GM10248 (cell line): ENCODE measurements at regions of chr1 and their contacts with region 1.

Region 1: GRCh38 chr1:30743584-30744059 is 14.0 kb downstream of the LAPTM5 start:
- DNase-seq: peak; percentile 81
- CTCF ChIP-seq: no peak

Region 2: DNA sequence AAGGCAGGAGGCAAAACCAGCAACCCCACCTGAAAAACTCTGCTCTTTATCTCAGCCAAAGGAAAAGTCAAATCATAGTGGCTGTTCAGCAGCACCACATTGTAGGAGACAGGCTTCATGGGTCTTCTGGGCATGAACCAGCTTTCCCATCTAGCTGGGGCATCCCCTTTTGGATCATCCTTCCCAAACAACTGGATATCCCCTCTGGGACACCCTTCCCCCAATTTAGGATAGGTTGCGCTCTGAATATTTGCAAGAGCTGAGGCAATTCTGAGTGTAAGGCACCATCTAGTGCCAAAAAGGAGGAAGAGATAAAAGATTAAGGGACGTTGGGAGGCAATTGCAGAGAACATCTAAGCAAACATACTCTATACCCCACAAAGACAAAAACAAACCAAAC is 316.1 kb before region 1 on chr1:
- CTCF ChIA-PET with region 1: no interaction called
- POLR2A ChIA-PET with region 1: no interaction called
- DNase-seq: no peak
- CTCF ChIP-seq: no peak

Region 3: GRCh38 chr1:30597711-30598110 is 145.9 kb before region 1 on chr1:
- CTCF ChIA-PET with region 1: no interaction called
- POLR2A ChIA-PET with region 1: no interaction called
- DNase-seq: no peak
- CTCF ChIP-seq: no peak

Region 4: GRCh38 chr1:30664103-30664755 is 79.4 kb before region 1 on chr1:
- CTCF ChIA-PET with region 1: no interaction called
- POLR2A ChIA-PET with region 1: no interaction called
- DNase-seq: no peak
- CTCF ChIP-seq: no peak

Region 5: DNA sequence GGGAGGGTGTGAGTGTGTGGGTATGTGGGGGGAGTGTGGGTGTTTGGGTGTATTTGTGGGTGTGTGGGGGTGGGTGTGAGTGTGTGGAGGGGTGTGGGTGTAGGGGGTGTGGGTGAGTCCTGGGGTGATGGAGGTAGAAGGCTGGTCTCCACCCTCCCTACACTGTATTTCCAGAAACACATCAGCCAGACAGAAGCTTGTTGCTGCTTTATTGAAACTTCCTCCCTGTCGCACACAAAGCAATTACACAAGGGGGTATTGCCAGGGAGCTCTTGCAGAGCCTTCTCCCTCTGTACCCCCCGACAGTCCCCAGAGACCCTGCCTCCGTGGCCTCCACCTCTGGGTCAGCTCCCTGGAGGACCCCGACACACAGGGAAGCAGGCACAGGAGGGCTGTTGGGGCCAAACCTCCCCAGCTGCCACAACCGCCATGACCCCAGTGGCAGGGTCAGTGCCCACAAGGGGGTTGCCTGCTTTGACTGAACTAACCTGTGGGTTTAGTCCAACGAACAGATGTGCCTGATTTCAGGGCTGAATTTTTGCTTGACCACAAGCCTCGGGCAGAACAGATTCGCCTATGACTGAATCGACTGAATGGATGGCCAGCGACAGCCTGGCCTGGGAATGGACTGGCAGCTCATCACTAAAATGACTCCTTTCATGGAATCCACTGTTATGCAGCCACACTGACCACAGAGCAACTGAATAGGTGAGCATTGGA is 11.2 kb before region 1 on chr1:
- CTCF ChIA-PET with region 1: interaction called, 25 read pairs
- POLR2A ChIA-PET with region 1: interaction called, 13 read pairs
- DNase-seq: peak; percentile 68
- CTCF ChIP-seq: no peak

Region 6: DNA sequence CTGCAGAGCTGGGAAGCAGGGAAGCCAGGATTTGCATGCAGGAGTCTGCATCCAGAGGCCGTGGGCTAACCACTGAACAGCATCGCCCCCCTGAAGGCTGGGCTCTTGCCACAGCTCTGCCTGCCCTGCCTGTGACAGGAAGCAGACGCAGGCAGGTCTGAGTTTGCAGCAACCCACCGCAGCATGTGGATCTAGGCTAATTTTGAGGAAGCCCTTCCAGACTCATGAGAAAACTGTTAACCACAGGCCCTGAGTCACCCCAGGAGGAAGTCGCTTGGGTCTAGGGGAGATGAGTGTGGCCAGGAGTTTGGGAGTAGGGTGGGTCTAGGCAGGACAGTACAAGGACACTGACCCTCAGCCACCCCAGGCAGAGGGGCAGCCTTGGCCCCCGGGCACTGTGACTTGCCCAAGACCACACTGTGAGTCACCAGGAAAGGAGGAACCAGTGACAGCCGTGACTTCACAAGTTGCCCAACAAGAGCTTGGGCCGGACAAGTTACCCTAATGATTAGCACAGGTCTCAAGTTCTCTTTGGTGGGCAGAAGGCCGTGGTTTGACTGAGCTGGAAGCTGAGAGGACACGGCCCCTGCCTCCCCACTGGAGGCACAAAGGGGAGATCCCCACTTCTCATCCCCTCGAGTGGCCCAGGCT is 13.0 kb after region 1 on chr1:
- CTCF ChIA-PET with region 1: interaction called, 162 read pairs
- POLR2A ChIA-PET with region 1: interaction called, 71 read pairs
- DNase-seq: no peak
- CTCF ChIP-seq: no peak

Region 7: DNA sequence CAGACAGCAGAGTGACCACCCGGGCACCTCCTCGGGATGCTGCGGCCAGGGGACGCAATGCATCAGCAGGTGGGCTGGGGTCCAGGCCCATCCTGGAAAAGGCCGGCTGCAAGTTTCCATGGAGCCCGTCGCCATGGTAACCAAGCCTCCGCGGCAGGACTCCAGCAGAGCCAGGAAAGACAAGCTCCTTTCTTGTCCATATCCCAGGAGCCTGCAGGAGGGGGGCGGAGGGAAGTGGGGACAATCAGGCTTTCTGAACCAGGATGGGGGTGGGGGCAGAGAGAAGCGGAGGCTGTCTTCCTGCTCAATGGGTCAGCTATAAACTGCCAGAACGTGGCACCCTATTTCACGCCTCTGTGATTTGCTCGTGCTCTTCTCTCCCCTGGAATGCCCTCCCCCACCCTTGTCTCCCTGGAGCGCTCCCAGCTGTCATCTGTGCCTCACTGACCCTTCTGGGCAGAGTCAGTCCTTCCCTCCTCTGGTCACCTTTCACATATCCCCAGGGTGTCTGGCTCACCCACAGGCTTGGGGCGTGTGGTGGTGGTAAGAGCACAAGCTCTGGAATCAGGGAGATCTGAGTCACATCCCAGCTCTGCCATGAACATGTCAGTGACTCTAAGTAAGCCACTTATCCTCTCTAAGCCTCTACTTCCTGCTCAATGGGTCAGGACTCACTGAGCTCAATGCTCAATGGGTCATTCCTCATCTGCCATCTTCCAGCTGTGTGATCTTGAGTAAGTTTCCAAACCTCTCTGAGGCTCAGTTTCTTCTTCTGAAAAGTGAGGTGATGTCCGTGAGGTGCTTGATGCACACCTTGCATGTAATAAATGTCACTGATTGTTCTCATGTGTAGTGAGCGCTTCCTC is 72.8 kb after region 1 on chr1:
- CTCF ChIA-PET with region 1: no interaction called
- POLR2A ChIA-PET with region 1: no interaction called
- DNase-seq: no peak
- CTCF ChIP-seq: no peak